Activated B cell treated with CpG ODN at 0.5 μM for 24 hours (primary cell): ENCODE measurements at regions of chr3 and their contacts with region 1.

Region 1: DNA sequence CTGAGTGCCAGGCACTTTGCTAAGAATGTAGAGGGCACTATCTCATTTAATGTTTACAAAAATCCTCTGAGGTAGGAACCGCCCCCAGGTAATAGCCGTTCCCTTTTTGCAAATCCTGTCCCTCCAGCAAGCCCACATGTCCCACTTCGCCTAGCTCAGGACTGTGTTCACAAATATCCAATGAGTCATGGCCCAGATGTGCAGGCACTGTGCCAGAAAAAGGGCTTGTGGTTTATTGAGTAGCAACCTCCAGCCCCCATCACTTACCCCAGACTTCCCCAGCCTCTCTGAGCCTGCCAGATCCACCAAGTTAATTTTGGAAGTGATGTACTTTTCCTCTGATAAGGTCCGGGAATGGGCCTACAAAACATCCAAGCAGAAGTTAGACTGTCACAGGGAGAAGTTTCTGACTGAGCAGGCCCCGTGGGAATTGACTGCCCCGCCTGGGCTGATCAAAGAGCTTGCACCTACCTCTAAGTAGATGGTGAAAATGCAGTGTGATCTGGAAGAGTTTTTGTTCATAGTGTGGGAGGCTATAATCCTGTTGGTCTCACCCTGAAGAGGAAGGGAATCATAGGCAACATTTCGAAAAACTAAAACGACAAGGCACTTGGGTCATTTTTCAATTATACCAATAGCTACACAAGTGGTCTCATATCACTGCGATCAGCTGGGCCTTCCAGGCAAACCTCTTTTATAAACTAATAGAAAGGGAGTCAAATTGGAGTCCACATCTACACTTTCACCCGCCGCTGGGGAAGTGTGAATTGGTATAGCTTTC is 15.7 kb downstream of the KIF9 start:
- DNase-seq: peak; percentile 27
- ATAC-seq: peak; percentile 92
- H3K4me3 Mint-ChIP-seq: no peak overlapping the region
- H3K27ac Mint-ChIP-seq: peak overlapping the region; percentile 43
- H3K4me1 Mint-ChIP-seq: peaks cover 12% of the 10 kb centered on the region
- H3K27me3 Mint-ChIP-seq: no peaks in the 10 kb centered on the region
- CTCF ChIP-seq: no peak

Region 2: DNA sequence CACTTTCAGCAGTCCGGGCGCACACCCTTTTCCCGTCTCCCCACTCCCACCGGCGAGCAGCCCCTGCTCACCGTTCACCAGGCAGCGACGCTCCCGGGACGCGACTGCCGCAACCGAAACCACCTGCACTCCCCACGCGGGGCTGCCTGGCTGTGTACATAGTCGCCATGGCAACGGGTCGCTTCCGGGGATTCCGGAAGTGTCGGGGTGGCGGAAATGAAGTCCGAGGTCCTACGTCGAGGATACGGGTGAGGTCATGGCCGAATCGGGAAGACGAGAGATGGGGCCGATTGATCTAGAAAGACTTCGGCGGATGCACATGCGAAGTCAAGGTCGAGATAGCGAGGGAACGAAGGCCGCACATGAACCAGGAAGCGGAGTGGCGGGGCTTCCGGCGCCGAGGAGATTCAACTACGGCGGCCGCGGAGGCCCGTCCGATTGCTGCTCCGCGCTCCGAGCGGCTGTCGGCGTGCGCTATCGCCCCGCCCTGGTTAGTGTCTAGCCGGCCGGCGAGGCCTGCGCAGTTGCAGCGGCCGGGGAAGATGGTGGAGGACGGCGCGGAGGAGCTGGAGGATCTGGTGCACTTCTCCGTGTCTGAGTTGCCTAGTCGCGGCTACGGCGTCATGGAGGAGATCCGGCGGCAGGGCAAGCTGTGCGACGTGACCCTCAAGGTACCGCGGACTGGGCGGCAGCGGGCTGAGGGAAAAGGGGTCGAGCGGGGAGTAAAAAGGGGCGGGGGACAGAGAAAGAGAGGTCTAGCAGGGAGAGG is 15.7 kb after region 1 on chr3 and contains the starts of genes KIF9 and KLHL18:
- CTCF ChIA-PET with region 1: interaction called, 3 read pairs
- POLR2A ChIA-PET with region 1: interaction called, 3 read pairs
- intact Hi-C with region 1: loop called (anchors 1 kb)
- DNase-seq: peak; percentile 93
- ATAC-seq: peak; percentile 82
- H3K4me3 Mint-ChIP-seq: peak within 1 kb of the TSS; percentile 100
- H3K27ac Mint-ChIP-seq: peak within 1 kb of the TSS; percentile 99
- H3K4me1 Mint-ChIP-seq: peaks cover 53% of the 10 kb centered on the region
- H3K27me3 Mint-ChIP-seq: no peaks in the 10 kb centered on the region
- CTCF ChIP-seq: no peak
- total RNA-seq, gene KIF9: 2.3 and 2.5 TPM in 2 replicates
- total RNA-seq, gene KLHL18: 36.6 and 38.0 TPM in 2 replicates